ENCODE measurements at regions of chr15 and their contacts with region 1.

Region 1: GRCh38 chr15:23648920-23649515 is 1.4 kb upstream of the MAGEL2 start:
- ATAC-seq: peak in 1 of 8 experiments; percentile 16
- H3K4me3 ChIP-seq: peak overlapping the region in 4 of 5 donors; percentile 55 to 62 (median 61)
- H3K27ac ChIP-seq: no peak overlapping the region
- H3K4me1 ChIP-seq: peaks cover 5 to 21% of the 10 kb centered on the region in 2 donors

Region 2: DNA sequence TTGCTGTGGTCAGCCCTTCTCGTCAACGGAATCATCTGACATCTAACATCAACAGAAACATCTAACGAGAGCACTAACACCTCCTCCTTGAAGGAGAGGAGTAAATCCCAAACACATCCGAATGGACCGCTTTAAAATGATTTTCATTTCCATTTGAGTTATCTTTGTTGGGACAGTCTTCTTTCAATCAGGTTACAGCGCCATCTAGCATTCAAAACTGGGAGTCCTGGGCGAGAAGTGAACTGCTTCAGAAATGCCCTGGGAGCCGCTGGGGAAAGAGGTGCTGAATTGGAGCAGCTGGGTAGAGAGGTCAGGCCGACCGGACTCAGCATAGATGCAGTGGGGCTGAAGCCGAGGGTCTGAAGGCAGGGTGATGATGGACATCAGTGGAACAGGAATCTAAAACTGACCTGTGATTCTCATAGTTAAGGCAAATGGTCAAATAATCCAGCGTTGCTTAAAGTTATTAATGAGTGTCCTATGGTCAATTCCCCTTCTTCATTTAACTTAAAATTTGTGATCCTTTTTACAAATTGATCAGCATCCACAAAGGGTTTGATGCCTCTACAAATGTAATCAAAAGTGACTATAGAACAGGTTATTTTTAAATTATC is 208.1 kb after region 1 on chr15:
- in situ Hi-C with region 1: loop called in 6 of 9 experiments (anchors 5 to 25 kb)
- ATAC-seq: peak in 7 of 8 experiments; percentile 40 to 62 (median 56)
- H3K4me3 ChIP-seq: peak overlapping the region in 1 of 5 donors; percentile 9
- H3K27ac ChIP-seq: no peak overlapping the region
- H3K4me1 ChIP-seq: peaks cover 24 to 29% of the 10 kb centered on the region in 2 donors